Activated CD4-positive, alpha-beta T cell treated with anti-CD3 and anti-CD28 coated beads, Interleukin-2, amount 10 ng/mL, durations not matched to agents 24 days and 14 days (primary cell): ENCODE measurements at regions of chr19 and their contacts with region 1.

Region 1: DNA sequence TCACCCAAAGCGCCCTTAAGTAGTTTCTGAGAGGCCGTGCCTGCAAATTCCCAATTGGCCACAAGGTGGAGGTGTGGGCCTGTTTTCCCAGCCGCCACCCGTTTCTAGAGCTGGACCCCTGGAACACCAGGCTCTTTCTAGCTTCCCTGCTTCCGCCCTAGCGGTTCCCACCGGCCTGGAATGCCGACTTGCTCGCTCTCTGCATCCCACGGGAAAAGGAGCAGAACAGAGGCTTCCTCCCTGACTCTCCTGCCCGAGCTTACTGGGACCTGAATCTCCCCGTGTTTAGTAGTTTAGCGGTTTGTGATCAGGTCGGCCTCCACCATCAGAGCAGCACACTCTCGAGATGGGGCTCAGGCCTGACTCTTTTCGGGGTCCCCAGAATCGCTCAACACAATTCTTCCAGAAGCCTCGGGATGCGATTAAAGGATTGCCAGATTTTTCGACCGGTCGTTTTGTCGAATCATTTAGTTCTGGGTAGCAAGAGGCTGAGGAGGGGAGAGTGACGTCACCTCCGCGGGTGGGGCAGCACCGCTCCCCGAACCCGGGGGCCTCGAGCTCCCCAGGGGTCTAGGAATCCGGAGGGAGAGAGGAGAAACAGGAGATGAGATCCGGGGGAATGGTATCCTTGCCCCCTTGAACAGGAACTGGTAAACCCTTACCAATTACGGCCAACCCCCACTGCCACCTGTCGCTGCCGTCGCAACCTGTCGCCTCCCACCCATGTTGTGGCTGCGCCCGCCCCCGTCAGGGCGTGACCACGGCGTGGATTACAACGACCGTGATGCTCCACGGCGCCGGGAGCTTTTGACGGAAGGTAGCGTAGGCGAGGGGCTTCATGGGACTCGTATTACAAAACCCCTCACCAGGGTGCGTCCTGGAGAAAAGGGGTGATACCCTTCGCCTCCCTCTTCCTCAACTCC is 8.0 kb downstream of the NAPSA start:
- DNase-seq: peak; percentile 96
- H3K4me3 Mint-ChIP-seq: peak overlapping the region; percentile 90
- H3K27ac Mint-ChIP-seq: peak overlapping the region; percentile 95
- H3K4me1 Mint-ChIP-seq: peaks cover 47% of the 10 kb centered on the region
- H3K27me3 Mint-ChIP-seq: no peaks in the 10 kb centered on the region

Region 2: GRCh38 chr19:50376166-50377050 is 19.0 kb after region 1 on chr19 and contains the start of gene NR1H2:
- intact Hi-C with region 1: loop called (anchors 1 kb)
- DNase-seq: peak; percentile 99
- H3K4me3 Mint-ChIP-seq: peak within 1 kb of the TSS; percentile 97
- H3K27ac Mint-ChIP-seq: peak within 1 kb of the TSS; percentile 99
- H3K4me1 Mint-ChIP-seq: peaks cover 16% of the 10 kb centered on the region
- H3K27me3 Mint-ChIP-seq: no peaks in the 10 kb centered on the region
- total RNA-seq, gene NR1H2: 81.4 and 84.7 TPM in 2 replicates

Region 3: DNA sequence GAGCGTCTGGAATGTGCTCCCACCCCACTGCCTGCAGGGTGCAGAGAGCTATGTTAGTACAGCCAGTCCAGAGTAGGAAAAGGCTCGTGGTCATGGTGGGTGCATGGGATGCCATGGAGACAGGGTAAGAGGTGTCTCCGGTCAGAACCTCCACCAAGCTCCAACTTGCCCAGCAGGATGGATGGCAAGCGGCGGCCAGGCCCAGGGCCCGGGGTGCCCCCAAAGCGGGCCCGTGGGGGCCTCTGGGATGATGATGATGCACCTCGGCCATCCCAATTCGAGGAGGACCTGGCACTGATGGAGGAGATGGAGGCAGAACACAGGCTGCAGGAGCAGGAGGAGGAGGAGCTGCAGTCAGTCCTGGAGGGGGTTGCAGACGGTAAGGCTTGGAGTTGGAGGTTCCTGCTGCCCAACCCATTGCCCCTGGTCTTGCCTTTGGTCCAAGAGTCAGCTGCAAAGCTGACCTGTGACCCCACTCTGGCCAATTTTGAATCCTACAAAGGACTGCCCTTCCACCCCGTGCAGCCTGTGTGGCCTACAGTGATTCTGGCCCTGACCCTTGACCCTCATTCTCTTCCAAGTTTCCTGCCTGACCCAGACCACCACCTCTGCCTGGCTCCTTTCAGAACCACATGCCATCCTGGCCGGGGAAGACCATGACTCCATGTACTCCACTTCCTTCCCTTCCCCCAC is 41.4 kb after region 1 on chr19:
- intact Hi-C with region 1: no loop called
- DNase-seq: no peak
- H3K4me3 Mint-ChIP-seq: no peak overlapping the region
- H3K27ac Mint-ChIP-seq: peak overlapping the region; percentile 29
- H3K4me1 Mint-ChIP-seq: peaks cover 4% of the 10 kb centered on the region
- H3K27me3 Mint-ChIP-seq: no peaks in the 10 kb centered on the region

Region 4: DNA sequence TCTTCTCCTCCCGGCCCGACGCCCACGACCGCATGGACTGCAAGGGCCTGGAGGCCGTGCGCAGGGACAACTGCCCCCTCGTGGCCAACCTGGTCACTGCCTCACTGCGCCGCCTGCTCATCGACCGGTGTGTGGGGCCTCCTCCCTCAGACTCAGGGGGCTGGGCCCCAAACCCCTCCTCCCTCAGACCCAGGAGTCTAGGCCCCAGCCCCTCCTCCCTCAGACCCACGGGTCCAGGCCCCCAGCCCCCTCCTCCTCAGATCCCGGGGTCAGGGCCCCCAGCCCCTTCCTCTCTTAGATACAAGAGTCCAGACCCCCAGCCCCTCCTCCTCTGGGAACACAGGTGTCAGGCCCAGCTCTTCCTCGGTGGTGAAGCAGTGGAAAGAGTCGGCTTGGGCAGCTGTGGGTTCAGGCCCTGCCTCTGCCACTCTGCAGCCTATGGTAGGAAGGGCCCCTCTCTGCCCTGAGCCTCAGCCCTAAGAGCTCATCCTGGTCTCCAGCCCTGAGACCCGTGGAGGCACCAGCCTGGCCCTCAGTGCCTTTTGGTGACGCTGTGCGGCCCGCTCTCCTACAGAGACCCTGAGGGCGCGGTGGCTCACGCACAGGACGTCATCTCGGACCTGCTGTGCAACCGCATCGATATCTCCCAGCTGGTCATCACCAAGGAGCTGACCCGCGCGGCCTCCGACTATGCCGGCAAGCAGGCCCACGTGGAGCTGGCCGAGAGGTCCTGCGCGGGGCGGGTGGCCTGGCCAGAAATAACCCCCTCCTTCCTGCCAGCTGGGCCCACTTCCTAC is 57.6 kb after region 1 on chr19:
- intact Hi-C with region 1: loop called (anchors 2 kb)
- DNase-seq: peak; percentile 92
- H3K4me3 Mint-ChIP-seq: no peak overlapping the region
- H3K27ac Mint-ChIP-seq: no peak overlapping the region
- H3K4me1 Mint-ChIP-seq: peaks cover 13% of the 10 kb centered on the region
- H3K27me3 Mint-ChIP-seq: peaks cover 8% of the 10 kb centered on the region

Region 5: GRCh38 chr19:50461066-50461875 is 103.8 kb after region 1 on chr19:
- intact Hi-C with region 1: loop called (anchors 1 kb)
- DNase-seq: peak; percentile 90
- H3K4me3 Mint-ChIP-seq: peak overlapping the region; percentile 40
- H3K27ac Mint-ChIP-seq: no peak overlapping the region
- H3K4me1 Mint-ChIP-seq: peaks cover 12% of the 10 kb centered on the region
- H3K27me3 Mint-ChIP-seq: peaks cover 5% of the 10 kb centered on the region

Region 6: DNA sequence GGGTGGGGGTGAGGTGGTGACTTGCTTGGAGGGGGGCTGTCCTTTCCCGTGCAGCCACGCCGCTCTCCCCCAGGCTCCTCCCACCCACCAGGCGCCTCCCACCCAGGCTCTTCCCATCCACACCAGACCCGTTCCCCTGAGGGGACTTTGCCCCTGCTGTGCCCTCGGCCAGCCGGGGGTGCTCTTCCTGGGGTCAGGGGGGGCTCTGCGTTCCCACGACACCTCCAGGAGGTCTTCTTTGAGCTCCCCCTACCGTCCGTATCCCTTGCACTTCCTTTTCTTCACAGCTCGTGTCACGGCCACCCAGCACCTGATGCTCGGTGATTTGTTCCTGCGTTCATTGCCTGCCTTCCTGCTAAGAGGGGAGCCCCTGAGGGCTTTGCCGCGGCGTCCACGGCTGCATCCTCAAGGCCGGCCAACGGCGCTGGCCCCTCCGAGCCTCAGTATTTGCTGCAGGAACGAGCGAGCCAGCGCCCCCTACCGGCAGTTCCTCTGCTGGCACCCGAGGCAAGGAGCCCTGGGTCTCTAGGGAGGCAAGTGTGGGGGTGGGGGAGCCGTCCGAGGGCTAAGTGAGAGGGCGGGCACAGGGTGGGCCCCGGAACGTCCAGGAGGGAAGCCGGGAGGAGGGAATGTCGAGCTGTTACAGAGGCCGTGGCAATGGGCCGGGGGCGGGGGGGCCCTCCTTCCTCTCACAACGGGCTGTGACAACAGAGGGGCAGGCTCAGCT is 199.0 kb after region 1 on chr19:
- intact Hi-C with region 1: loop called (anchors 5 kb)
- DNase-seq: peak; percentile 94
- H3K4me3 Mint-ChIP-seq: peak overlapping the region; percentile 98
- H3K27ac Mint-ChIP-seq: peak overlapping the region; percentile 81
- H3K4me1 Mint-ChIP-seq: peaks cover 4% of the 10 kb centered on the region
- H3K27me3 Mint-ChIP-seq: peaks cover 44% of the 10 kb centered on the region